ENCODE measurements at regions of chr16 and their contacts with region 1.

Region 1: GRCh38 chr16:21952793-21953540 is at the start of gene UQCRC2:
- DNase-seq: peak; percentile 93
- H3K4me3 Mint-ChIP-seq: peak within 1 kb of the TSS; percentile 86
- H3K27ac Mint-ChIP-seq: peak within 1 kb of the TSS; percentile 99
- H3K4me1 Mint-ChIP-seq: peaks cover 19% of the 10 kb centered on the region
- H3K27me3 Mint-ChIP-seq: no peaks in the 10 kb centered on the region
- CTCF ChIP-seq: no peak
- total RNA-seq, gene UQCRC2: 328 and 343 TPM in 2 replicates

Region 2: DNA sequence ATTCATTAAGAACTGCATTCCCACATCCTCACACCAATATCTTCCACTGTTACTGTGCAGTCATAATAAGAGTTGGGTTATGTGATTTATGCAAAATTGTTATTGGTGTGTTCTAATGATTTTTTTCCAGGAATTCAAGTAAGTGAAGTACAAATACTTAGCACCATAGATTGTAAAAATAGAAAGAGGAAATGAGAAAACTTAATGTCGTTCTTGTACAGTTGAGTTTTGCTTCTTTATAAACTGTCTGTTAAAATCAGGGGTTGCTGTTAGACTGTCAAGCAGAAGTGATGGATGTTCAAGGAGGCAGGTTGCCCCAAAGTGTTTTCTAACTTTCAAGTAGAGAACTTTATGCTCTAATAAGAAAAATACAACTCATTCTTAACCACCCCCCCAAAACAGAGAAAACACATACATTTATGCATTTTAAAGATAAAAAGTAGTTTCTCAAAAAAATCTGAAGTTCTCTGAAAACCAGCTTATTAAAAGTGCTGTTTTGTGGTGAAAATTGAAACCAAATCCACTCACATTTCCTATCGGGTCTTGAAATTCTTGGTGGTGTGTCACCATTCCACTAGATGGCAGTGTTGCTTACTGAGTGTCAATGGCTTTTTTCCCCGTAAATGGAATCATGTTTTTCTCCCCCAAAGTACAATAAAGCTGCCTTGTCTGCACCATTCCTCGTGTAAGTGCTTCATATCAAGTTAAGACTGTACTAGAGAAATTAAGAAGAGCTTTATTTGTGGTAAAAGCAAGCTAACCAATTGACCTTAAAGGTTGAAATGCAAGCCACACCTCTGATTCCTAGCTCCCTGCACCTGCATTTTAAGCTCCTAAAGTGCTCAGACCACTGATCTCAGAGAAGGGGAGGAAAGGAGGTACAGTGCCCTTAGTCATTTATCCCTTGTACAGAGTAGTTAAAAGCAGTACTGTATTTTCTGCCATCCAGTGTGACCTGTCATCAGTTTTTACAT is 295.9 kb before region 1 on chr16:
- CTCF ChIA-PET with region 1: interaction called, 3 read pairs
- intact Hi-C with region 1: loop called (anchors 5 kb)
- DNase-seq: peak; percentile 62
- H3K4me3 Mint-ChIP-seq: no peak overlapping the region
- H3K27ac Mint-ChIP-seq: no peak overlapping the region
- H3K4me1 Mint-ChIP-seq: peaks cover 9% of the 10 kb centered on the region
- H3K27me3 Mint-ChIP-seq: no peaks in the 10 kb centered on the region
- CTCF ChIP-seq: peak; percentile 88

Region 3: GRCh38 chr16:22262460-22262859 is 309.5 kb after region 1 on chr16:
- CTCF ChIA-PET with region 1: no interaction called
- intact Hi-C with region 1: no loop called
- DNase-seq: no peak
- H3K4me3 Mint-ChIP-seq: no peak overlapping the region
- H3K27ac Mint-ChIP-seq: no peak overlapping the region
- H3K4me1 Mint-ChIP-seq: no peaks in the 10 kb centered on the region
- H3K27me3 Mint-ChIP-seq: no peaks in the 10 kb centered on the region
- CTCF ChIP-seq: no peak